ENCODE measurements at regions of chr2 and their contacts with region 1.

Region 1: GRCh38 chr2:7513834-7514233 is 596.6 kb downstream of the RNF144A start:
- DNase-seq: no peak
- H3K4me3 ChIP-seq: no peak overlapping the region
- H3K27ac ChIP-seq: no peak overlapping the region
- H3K4me1 ChIP-seq: no peaks in the 10 kb centered on the region
- H3K27me3 ChIP-seq: no peaks in the 10 kb centered on the region
- CTCF ChIP-seq: no peak
- POLR2A ChIP-seq: no peak

Region 2: DNA sequence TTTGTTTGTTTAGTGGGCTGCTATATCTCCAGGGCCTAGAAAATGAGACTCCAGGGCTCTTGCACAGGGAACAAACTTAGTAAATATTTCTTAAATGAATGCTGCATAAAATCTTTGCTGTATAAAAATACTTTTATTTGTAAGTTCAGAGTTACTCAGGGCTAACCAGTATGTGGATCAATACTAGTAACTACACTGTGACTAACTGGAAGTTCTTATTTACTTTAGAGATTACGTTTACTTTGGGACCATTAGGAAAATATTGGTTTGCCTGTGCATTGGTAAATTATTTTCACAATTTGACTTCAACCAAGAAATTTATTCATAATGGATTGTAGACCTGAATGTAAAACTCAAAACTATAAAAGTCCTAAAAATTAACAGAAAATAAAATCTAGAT is 21.1 kb before region 1 on chr2:
- intact Hi-C with region 1: loop called (anchors 2 kb)
- DNase-seq: no peak
- H3K4me3 ChIP-seq: no peak overlapping the region
- H3K27ac ChIP-seq: no peak overlapping the region
- H3K4me1 ChIP-seq: no peaks in the 10 kb centered on the region
- H3K27me3 ChIP-seq: no peaks in the 10 kb centered on the region
- CTCF ChIP-seq: no peak
- POLR2A ChIP-seq: no peak

Measured in vagina (tissue), 2 donors.